ENCODE measurements at regions of chrX and their contacts with region 1.

Region 1: DNA sequence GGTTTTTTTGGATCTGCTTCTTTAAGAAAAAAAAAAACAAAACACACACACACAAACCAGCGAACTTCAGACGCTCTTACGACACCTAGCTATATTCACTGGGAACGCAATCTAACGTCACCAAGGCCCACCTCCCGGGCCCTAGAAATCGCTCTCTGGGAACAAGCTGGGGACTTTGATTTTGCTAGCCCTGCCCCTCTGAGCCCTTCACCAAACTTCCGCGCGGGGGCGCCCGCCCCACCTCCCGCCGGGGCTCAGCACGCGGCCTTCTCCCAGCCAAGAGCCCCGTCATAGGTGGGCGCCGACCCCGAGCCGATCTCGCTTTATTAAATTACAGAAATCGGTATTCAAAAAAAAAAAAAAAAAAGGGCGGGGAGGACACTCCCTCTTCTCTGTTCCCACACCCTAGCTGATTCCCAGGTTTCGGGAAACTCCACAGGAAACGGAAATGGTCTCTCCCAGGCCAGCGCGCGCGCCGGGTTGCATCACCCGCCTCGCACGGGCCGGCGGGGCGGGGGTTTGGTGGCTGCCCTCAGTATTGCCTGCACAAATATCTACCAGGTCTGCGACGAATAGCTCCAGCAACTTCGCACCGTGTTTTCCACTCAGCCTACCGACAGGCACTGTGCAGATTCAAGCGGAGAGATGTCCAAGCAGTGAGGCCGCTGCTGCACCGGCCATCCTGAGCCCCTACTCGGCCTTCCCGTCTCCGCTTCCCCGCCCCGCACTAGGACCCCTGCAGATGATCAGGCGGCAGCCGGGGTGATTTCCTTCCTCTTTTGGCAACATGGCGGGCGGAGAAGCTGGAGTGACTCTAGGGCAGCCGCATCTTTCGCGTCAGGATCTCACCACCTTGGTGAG is at the start of gene EIF2S3:
- DNase-seq: peak in 1 of 2 donors; percentile 94
- H3K4me3 ChIP-seq: peak within 1 kb of the TSS in 1 of 2 donors; percentile 88
- H3K27ac ChIP-seq: peak within 1 kb of the TSS; percentile 77
- H3K4me1 ChIP-seq: peaks cover 12% of the 10 kb centered on the region
- H3K27me3 ChIP-seq: no peaks in the 10 kb centered on the region
- CTCF ChIP-seq: peak in 2 of 3 experiments; percentile 29 to 49
- POLR2A ChIP-seq: no peak
- total RNA-seq, gene EIF2S3: 121 TPM

Region 2: GRCh38 chrX:24027985-24028384 is 26.4 kb before region 1 on chrX:
- intact Hi-C with region 1: loop called (anchors 1 kb)
- DNase-seq: no peak
- H3K4me3 ChIP-seq: no peak overlapping the region
- H3K27ac ChIP-seq: no peak overlapping the region
- H3K4me1 ChIP-seq: no peaks in the 10 kb centered on the region
- H3K27me3 ChIP-seq: no peaks in the 10 kb centered on the region
- CTCF ChIP-seq: no peak
- POLR2A ChIP-seq: no peak

Region 3: DNA sequence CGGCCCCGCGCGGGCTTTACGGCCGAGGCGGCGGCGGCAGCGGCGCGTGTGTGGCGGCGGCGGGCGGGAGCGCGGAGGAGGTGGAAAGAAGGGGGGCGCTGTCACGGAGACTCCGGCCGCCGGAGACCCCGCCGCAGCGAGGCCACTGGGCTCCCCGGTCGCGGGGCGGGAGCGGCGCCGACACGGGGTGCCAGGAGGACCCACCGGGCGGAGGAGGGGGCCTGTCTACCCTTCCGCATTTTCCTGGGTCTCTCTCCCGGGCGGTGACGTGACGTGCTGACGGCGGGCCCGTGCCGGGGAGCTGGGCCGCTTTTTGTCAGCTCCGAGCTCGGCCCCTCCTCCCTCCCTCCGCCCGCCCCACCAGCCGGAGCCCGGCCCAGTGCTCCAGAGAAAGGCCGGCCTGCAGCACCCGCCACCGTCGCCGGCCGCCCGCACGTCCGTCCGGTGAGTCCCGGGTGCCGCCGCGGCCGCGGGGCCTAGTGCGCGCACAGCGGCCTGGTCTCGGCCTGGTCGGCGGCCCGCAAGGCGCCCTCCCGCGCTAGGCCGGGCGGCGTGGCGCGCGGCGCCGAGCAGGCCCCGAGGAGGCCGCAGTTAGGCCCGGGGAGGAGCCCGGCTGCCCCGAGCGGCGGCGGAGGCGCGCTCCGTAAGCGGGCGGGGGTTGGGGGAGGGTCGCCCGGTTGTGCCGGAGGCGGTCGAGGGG is 95.1 kb after region 1 on chrX and contains the start of gene ZFX:
- intact Hi-C with region 1: loop called (anchors 10 kb)
- DNase-seq: no peak
- H3K4me3 ChIP-seq: peak within 1 kb of the TSS; percentile 71 to 87
- H3K27ac ChIP-seq: peak within 1 kb of the TSS; percentile 99
- H3K4me1 ChIP-seq: peaks cover 74% of the 10 kb centered on the region
- H3K27me3 ChIP-seq: no peaks in the 10 kb centered on the region
- CTCF ChIP-seq: no peak
- POLR2A ChIP-seq: no peak
- total RNA-seq, gene ZFX: 62.4 TPM